Endothelial cell of umbilical vein (primary cell): ENCODE measurements at regions of chr9 and their contacts with region 1.

Region 1: GRCh38 chr9:120936011-120936763 is 9.6 kb upstream of the TRAF1 start:
- DNase-seq: peak; percentile 95
- H3K4me3 ChIP-seq: no peak overlapping the region
- H3K27ac ChIP-seq: peak overlapping the region; percentile 72
- H3K4me1 ChIP-seq: peaks cover 58% of the 10 kb centered on the region
- H3K27me3 ChIP-seq: no peaks in the 10 kb centered on the region
- CTCF ChIP-seq: peak; percentile 89 to 90
- POLR2A ChIP-seq: no peak

Region 2: DNA sequence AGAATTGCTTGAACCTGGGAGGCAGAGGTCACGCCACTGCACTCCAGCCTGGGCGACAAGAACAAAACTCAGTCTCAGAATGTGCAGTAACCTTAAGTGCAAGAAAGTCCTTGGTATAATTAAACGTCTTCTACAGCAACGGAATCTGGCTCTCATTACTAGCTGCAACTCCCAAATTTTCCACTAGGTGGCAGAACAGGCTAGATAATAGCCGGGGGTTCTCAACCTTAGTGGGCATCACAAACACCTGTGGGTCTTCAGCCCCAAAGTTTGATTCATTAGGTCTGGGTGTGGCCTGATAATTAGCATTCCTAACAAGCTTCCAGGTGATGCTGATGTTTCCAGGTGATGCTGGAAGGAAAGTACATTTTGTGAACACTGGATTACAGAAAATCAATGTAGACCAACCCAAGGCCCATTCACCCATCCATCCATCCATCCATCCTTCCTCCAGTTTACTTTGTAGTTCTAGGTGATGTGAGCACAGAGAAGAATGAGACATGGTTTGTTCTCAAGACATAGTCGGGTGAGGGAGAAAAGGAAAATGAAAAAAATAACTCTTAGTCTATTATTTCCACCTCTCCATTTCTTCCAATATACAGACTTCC is 180.3 kb before region 1 on chr9:
- CTCF ChIA-PET with region 1: interaction called, 8 read pairs
- POLR2A ChIA-PET with region 1: no interaction called
- dilution Hi-C with region 1: no loop called
- intact Hi-C with region 1: loop called (anchors 1 kb)
- DNase-seq: peak; percentile 65
- H3K4me3 ChIP-seq: no peak overlapping the region
- H3K27ac ChIP-seq: no peak overlapping the region
- H3K4me1 ChIP-seq: no peaks in the 10 kb centered on the region
- H3K27me3 ChIP-seq: no peaks in the 10 kb centered on the region
- CTCF ChIP-seq: peak; percentile 70 to 74
- POLR2A ChIP-seq: no peak

Region 3: DNA sequence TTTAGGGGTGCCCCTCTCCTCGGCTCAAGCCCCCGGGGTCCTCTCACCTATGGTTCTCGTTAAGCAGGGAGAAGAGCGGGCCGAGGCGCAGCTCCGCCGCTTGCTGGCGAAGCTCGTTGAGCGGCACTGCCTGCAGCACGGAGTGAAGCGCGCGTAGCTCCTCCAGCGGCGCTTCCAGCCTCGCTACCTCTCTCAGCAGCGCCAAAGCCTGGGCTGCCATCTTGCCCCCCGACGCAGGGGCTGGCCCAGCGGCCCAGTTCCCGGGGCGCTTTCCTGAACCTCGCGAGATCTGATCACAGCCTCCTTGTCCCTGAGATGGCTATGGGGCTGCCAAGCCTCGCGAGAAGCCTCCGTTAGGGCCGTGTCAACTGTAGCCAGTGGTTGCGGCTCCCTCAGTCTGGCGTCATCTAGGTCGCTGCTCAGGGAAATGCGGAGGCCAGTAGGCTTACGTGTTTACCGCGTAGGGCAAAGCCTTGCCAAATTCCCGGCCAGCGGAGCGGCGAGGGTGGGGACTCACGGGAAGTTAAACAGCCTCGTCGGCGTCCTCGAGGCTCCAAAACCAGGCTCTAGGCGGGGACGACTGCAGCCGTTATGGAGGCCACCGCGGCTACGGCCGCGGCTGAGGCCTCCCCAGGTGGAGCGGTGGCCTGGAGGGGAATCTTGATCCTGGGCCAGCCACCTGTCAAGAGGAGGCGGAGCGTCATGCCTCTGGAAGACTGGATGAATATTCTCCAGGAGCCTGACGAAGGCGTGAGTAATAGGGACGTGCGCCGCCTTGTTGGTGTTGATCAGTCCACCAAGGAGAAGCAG is 93.3 kb before region 1 on chr9 and contains the start of gene PSMD5:
- CTCF ChIA-PET with region 1: interaction called, 4 read pairs
- POLR2A ChIA-PET with region 1: no interaction called
- dilution Hi-C with region 1: no loop called
- intact Hi-C with region 1: loop called (anchors 1 kb)
- DNase-seq: peak; percentile 99
- H3K4me3 ChIP-seq: peak within 1 kb of the TSS; percentile 53 to 80 (median 76)
- H3K27ac ChIP-seq: peak within 1 kb of the TSS; percentile 72
- H3K4me1 ChIP-seq: peaks cover 25% of the 10 kb centered on the region
- H3K27me3 ChIP-seq: no peaks in the 10 kb centered on the region
- CTCF ChIP-seq: no peak
- POLR2A ChIP-seq: peak; percentile 92
- total RNA-seq, gene PSMD5: 62.2 and 70.2 TPM in 2 replicates

Region 4: DNA sequence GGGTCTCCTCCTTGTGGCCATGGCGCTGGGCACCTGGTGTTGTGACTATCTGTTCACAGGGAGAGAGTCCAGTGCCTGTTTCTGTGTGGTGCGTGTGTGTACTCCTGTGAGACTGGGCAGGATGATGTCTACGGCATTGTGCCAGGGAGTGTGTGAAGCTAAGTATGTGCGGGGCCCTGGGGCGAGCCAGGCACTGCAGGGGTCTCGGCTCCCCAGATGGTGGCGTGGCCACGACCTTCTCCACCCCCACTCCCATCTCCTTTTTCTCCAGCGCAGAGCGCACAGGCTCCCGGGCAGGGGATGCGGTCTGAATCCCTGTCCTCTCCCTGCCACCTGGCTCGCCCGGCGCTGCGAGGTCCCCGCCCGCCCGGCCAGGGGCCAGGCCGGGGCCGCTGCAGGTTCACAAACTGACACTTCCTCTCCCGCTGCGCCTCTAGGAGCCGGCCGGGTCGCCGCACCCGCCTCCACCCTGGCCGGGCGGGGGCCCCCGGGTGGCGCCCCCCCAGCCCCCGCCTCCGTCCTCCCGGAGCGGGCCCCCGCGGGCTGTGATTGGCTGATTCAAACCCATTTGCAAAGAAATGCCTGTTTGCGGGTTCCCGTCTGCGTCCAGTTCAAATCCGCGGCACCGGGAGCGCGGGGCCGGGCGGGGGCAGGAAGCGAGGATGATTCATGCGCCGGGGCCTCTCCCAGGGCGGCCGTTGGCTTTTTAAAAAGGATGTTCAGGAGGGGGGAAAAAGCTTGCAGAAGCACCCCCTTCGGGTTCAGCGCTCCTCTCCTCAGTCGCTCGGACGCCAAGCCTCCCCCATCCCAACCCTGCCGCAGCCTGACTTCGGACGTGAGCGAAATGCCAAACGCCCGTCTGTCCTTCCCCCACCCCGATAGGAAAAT is 60.0 kb before region 1 on chr9:
- CTCF ChIA-PET with region 1: interaction called, 8 read pairs
- POLR2A ChIA-PET with region 1: no interaction called
- dilution Hi-C with region 1: no loop called
- intact Hi-C with region 1: loop called (anchors 1 kb)
- DNase-seq: peak; percentile 90
- H3K4me3 ChIP-seq: peak overlapping the region; percentile 66 to 86 (median 70)
- H3K27ac ChIP-seq: peak overlapping the region; percentile 74
- H3K4me1 ChIP-seq: peaks cover 26% of the 10 kb centered on the region
- H3K27me3 ChIP-seq: no peaks in the 10 kb centered on the region
- CTCF ChIP-seq: peak in 1 of 2 donors; percentile 11
- POLR2A ChIP-seq: no peak

Region 5: DNA sequence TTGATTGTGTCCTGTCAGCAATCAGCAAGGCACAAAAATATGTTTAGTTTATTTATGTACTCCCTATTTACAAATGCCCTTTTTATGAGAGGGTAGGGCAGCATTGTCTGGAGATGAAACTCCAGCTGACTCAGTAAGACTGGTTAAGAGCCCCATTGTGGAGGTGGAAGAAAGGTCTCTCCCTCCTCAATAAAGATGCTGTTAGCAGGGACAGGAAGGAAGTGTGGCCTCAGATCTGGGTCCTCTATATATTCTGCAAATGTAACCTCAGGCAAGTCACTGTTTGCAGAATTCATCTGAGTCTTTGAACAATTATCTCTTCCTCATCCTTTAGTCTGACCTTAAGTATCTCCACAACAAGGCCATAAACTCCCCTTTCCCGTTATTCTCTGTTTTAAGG is 38.7 kb after region 1 on chr9:
- CTCF ChIA-PET with region 1: no interaction called
- POLR2A ChIA-PET with region 1: no interaction called
- dilution Hi-C with region 1: no loop called
- intact Hi-C with region 1: no loop called
- DNase-seq: no peak
- H3K4me3 ChIP-seq: no peak overlapping the region
- H3K27ac ChIP-seq: no peak overlapping the region
- H3K4me1 ChIP-seq: no peaks in the 10 kb centered on the region
- H3K27me3 ChIP-seq: no peaks in the 10 kb centered on the region
- CTCF ChIP-seq: no peak
- POLR2A ChIP-seq: no peak

Region 6: GRCh38 chr9:121074635-121075385 is 138.6 kb after region 1 on chr9 and contains the start of gene CNTRL:
- CTCF ChIA-PET with region 1: interaction called, 3 read pairs
- POLR2A ChIA-PET with region 1: no interaction called
- dilution Hi-C with region 1: no loop called
- intact Hi-C with region 1: loop called (anchors 5 kb)
- DNase-seq: peak; percentile 86
- H3K4me3 ChIP-seq: peak within 1 kb of the TSS; percentile 6 to 78 (median 36)
- H3K27ac ChIP-seq: peak within 1 kb of the TSS; percentile 56
- H3K4me1 ChIP-seq: peaks cover 25% of the 10 kb centered on the region
- H3K27me3 ChIP-seq: no peaks in the 10 kb centered on the region
- CTCF ChIP-seq: no peak
- POLR2A ChIP-seq: peak; percentile 49
- total RNA-seq, gene CNTRL: 21.8 and 22.0 TPM in 2 replicates